Breast epithelium (tissue), 4 donors: ENCODE measurements at regions of chr14 and their contacts with region 1.

Region 1: GRCh38 chr14:46018846-46019420 is 632.6 kb downstream of the RPL10L start:
- DNase-seq: no peak
- H3K4me3 ChIP-seq: no peak overlapping the region
- H3K27ac ChIP-seq: no peak overlapping the region
- H3K4me1 ChIP-seq: no peaks in the 10 kb centered on the region
- H3K27me3 ChIP-seq: no peaks in the 10 kb centered on the region
- CTCF ChIP-seq: no peak
- POLR2A ChIP-seq: no peak

Region 2: DNA sequence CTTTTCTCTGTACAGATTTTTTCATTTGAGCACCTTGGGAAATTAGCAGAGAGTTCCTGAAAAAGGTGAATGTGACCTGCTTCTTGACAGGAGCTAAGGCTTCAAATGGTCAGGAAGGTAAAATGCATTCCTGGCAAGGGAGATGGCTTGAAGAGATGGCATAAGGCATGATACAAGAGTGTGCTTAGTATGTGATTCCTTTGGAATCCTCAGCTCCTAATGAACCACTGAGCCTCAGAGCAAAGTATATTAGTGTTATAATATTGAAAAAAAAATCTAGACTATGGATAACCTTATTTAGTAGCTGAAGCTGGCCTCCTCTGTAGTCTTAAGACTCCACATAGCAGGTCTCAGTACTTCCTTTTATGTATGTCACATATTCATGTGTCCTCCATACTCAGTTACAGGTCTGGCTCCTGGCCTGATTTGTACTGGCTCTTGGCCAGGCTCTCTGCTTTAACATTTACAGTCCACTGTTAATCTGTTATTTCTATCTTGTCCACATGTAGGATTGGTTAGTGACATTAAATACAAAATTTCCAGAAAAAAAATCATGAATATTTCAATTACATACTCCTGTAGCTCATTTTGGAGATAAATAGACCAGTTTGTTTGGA is 1039.1 kb before region 1 on chr14:
- intact Hi-C with region 1: no loop called
- DNase-seq: peak in 1 of 2 donors; percentile 72
- H3K4me3 ChIP-seq: no peak overlapping the region
- H3K27ac ChIP-seq: no peak overlapping the region
- H3K4me1 ChIP-seq: no peaks in the 10 kb centered on the region
- H3K27me3 ChIP-seq: no peaks in the 10 kb centered on the region
- CTCF ChIP-seq: no peak
- POLR2A ChIP-seq: no peak

Region 3: GRCh38 chr14:45877981-45878380 is 141.0 kb before region 1 on chr14:
- intact Hi-C with region 1: no loop called
- DNase-seq: no peak
- H3K4me3 ChIP-seq: no peak overlapping the region
- H3K27ac ChIP-seq: no peak overlapping the region
- H3K4me1 ChIP-seq: no peaks in the 10 kb centered on the region
- H3K27me3 ChIP-seq: no peaks in the 10 kb centered on the region
- CTCF ChIP-seq: no peak
- POLR2A ChIP-seq: no peak

Region 4: GRCh38 chr14:45998551-45998950 is 20.4 kb before region 1 on chr14:
- intact Hi-C with region 1: no loop called
- DNase-seq: no peak
- H3K4me3 ChIP-seq: no peak overlapping the region
- H3K27ac ChIP-seq: no peak overlapping the region
- H3K4me1 ChIP-seq: no peaks in the 10 kb centered on the region
- H3K27me3 ChIP-seq: no peaks in the 10 kb centered on the region
- CTCF ChIP-seq: no peak
- POLR2A ChIP-seq: no peak

Region 5: DNA sequence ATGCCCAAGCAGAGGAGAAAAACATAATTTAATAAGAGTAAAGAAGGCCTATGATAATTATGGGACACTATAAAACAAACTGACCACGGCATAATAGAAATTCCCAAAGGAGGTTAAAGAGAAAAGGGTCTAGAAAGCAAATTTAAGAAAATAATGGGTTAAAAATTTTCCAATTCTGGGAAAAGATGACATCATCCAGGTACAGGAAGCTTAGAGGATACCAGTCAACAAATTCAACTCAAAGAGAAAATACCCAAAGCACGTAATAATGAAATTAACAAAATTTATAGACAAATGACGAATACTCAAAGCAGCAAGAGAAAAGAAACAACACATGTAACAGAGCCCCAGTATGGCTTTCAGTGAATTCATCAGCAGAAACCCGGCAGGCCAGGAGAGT is 182.9 kb after region 1 on chr14:
- intact Hi-C with region 1: loop called (anchors 5 kb)
- DNase-seq: no peak
- H3K4me3 ChIP-seq: no peak overlapping the region
- H3K27ac ChIP-seq: no peak overlapping the region
- H3K4me1 ChIP-seq: no peaks in the 10 kb centered on the region
- H3K27me3 ChIP-seq: no peaks in the 10 kb centered on the region
- CTCF ChIP-seq: no peak
- POLR2A ChIP-seq: no peak